ENCODE measurements at regions of chr3 and their contacts with region 1.

Region 1: GRCh38 chr3:41933146-41933676 is 28.7 kb downstream of the ULK4 start:
- DNase-seq: no peak
- H3K4me3 ChIP-seq: no peak overlapping the region
- H3K27ac ChIP-seq: peak overlapping the region; percentile 35 to 81 (median 64)
- H3K4me1 ChIP-seq: peaks cover 0 to 25% (median 12%) of the 10 kb centered on the region in 4 donors
- H3K27me3 ChIP-seq: no peaks in the 10 kb centered on the region
- CTCF ChIP-seq: no peak
- EP300 ChIP-seq: peak in 2 of 4 donors; percentile 39 to 75
- POLR2A ChIP-seq: no peak

Region 2: GRCh38 chr3:41630708-41631107 is 302.5 kb before region 1 on chr3:
- intact Hi-C with region 1: no loop called
- DNase-seq: no peak
- H3K4me3 ChIP-seq: no peak overlapping the region
- H3K27ac ChIP-seq: no peak overlapping the region
- H3K4me1 ChIP-seq: peaks cover 0 to 15% (median 0%) of the 10 kb centered on the region in 4 donors
- H3K27me3 ChIP-seq: no peaks in the 10 kb centered on the region
- CTCF ChIP-seq: no peak
- EP300 ChIP-seq: no peak
- POLR2A ChIP-seq: no peak

Region 3: GRCh38 chr3:41961750-41962679 is 28.8 kb after region 1 on chr3 and contains the start of gene ULK4:
- intact Hi-C with region 1: loop called (anchors 2 kb)
- DNase-seq: peak; percentile 99
- H3K4me3 ChIP-seq: peak within 1 kb of the TSS; percentile 79 to 97 (median 90)
- H3K27ac ChIP-seq: peak within 1 kb of the TSS; percentile 88 to 93 (median 90)
- H3K4me1 ChIP-seq: peaks cover 0 to 14% (median 10%) of the 10 kb centered on the region in 4 donors
- H3K27me3 ChIP-seq: no peaks in the 10 kb centered on the region
- CTCF ChIP-seq: no peak
- EP300 ChIP-seq: peak in 1 of 4 donors; percentile 32
- POLR2A ChIP-seq: peak in 1 of 2 donors; percentile 7
- total RNA-seq, gene ULK4: 8.9 to 18.6 (median 16.6) TPM